K562 (cell line): ENCODE measurements at regions of chr6 and their contacts with region 1.

Region 1: DNA sequence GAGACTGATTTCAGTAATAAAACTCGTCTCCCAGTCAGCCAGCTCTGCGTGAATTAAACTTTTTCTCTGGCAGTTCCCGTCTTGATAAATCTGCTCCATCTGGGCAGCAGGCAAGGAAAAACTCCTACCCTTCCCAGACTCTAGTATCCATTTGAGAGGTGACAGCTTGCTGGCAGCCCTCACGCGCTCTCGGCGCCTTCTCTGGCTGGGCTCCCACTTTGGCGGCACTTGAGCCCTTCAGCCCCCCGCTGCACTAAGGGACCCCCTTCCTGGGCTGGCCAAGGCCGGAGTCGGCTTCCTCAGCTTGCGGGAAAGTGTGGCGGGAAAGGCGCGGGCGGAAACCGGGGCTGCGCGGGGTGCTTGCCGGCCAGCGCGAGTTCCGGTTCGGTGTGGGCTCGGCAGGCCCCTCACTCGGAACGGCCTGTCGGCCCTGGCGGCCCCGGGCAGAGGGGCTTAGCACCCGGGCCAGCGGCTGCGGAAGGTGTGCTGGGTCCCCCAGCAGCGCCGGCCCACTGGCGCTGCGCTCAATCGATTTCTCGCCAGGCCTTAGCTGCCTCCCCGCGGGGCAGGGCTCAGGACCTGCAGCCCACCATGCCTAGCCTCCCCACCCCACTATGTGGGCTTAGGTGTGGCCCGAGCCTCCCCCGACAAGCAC is 21.8 kb upstream of the GMPR start:
- DNase-seq: no peak
- ATAC-seq: no peak
- H3K4me3 ChIP-seq: no peak overlapping the region
- H3K27ac ChIP-seq: peak overlapping the region; percentile 93
- H3K4me1 ChIP-seq: peaks cover 26 to 38% of the 10 kb centered on the region in 2 experiments
- H3K27me3 ChIP-seq: no peaks in the 10 kb centered on the region
- CTCF ChIP-seq: no peak
- EP300 ChIP-seq: no peak
- POLR2A ChIP-seq: no peak
- RAD21 ChIP-seq: no peak

Region 2: GRCh38 chr6:16228709-16229665 is 12.4 kb after region 1 on chr6:
- CTCF ChIA-PET with region 1: no interaction called
- POLR2A ChIA-PET with region 1: interaction called, 6 read pairs
- in situ Hi-C with region 1: no loop called
- intact Hi-C with region 1: loop called (anchors 1 kb)
- DNase-seq: no peak
- ATAC-seq: peak; percentile 8
- H3K4me3 ChIP-seq: no peak overlapping the region
- H3K27ac ChIP-seq: no peak overlapping the region
- H3K4me1 ChIP-seq: peaks cover 24 to 53% of the 10 kb centered on the region in 2 experiments
- H3K27me3 ChIP-seq: no peaks in the 10 kb centered on the region
- CTCF ChIP-seq: peak in 1 of 3 experiments; percentile 38; a peak in 2 of 6 replicates
- EP300 ChIP-seq: no peak
- POLR2A ChIP-seq: no peak
- RAD21 ChIP-seq: peak in 1 of 2 experiments; percentile 45; a peak in 2 of 4 replicates